RWPE1 (cell line): ENCODE measurements at regions of chr12 and their contacts with region 1.

Region 1: DNA sequence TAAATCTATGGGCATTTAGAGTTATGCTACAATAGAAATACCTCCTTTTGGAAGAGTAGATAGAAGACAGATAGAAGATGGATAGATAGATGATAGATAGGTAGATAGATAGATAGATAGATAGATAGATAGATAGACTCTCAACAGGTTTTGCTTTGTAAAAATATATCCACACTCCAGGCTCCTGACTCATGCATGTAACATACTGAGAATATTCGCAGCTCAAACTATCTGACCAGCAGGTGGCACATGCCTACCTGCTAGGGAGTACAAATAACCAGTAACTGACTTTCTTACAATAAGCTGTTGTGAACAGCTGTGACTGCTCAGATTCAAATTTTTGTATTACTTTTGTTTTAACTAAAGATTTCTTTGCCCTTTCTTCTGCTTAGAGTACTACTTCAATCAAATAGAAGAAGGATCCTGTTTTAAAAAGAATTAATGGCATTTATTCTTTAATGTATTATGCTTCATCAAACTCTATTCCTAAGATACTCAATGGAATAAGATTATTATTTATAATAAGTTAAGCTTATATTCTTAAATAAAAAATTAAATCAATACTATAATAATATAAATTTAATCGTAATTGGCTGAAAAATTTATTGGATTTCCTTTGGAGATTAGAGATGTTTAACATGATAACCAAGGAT is 15.8 kb upstream of the CPNE8 start:
- DNase-seq: peak; percentile 54
- H3K27ac ChIP-seq: no peak overlapping the region
- CTCF ChIP-seq: peak; percentile 77

Region 2: GRCh38 chr12:39103552-39104165 is 182.5 kb after region 1 on chr12:
- CTCF ChIA-PET with region 1: interaction called, 13 read pairs
- POLR2A ChIA-PET with region 1: no interaction called
- DNase-seq: peak; percentile 80
- H3K27ac ChIP-seq: no peak overlapping the region
- CTCF ChIP-seq: peak; percentile 81

Region 3: DNA sequence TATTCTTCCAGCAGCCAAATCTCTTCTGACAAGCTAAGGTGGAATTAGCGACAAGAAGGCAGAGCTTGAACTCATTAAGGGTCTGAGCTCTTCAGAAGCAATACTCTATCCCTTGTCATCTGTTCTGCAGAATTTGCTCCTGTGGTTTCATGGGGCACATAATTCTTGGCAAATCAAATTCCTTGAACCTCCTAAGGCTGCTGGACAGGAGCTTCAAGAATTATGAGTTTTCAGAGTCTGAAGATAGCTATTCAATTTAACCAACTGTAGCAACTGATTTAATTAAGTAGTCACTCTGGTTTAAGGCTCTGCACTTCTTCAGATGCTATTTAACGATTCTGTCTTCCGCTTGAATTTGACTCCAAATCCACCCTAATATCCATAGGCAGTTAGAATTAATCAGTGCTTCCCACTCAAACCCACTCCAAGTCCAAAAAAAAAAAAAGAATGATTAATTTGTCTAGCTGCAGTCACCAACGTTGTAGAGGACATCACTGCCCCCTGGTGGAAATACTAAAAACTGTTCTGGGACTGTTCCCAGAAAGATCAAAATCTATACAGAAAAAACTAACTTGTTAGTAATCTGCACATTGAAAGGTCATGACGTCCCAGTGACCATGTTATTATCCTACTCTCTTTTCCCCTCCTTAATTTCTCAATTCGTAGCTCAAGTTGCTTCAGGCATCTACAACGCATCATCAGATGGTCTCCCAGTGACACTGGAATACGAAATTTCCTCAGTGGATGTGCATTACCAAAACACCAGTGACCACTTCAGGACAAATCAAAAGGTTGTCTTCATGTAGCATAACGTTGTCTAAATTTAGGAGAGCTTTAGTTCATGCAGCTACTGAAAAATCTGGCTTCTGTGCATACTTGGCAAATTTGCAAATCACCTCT is 352.0 kb after region 1 on chr12:
- CTCF ChIA-PET with region 1: interaction called, 13 read pairs
- POLR2A ChIA-PET with region 1: no interaction called
- DNase-seq: peak; percentile 18
- H3K27ac ChIP-seq: no peak overlapping the region
- CTCF ChIP-seq: peak; percentile 71